SK-N-SH (cell line): ENCODE measurements at regions of chr2 and their contacts with region 1.

Region 1: GRCh38 chr2:68121873-68122679 is 35.6 kb upstream of the PNO1 start:
- DNase-seq: peak; percentile 73
- H3K4me3 ChIP-seq: peak overlapping the region in 1 of 2 experiments; percentile 47; a peak in 1 of 4 replicates
- H3K27ac ChIP-seq: no peak overlapping the region
- H3K4me1 ChIP-seq: peaks cover 0 to 9% of the 10 kb centered on the region in 2 experiments; a peak in 1 of 4 replicates
- H3K27me3 ChIP-seq: no peaks in the 10 kb centered on the region
- CTCF ChIP-seq: peak; percentile 97
- EP300 ChIP-seq: no peak
- RAD21 ChIP-seq: peak; percentile 93

Region 2: GRCh38 chr2:68134554-68134953 is 12.5 kb after region 1 on chr2:
- CTCF ChIA-PET with region 1: interaction called, 39 read pairs
- POLR2A ChIA-PET with region 1: no interaction called
- DNase-seq: no peak
- H3K4me3 ChIP-seq: no peak overlapping the region
- H3K27ac ChIP-seq: no peak overlapping the region
- H3K4me1 ChIP-seq: no peaks in the 10 kb centered on the region
- H3K27me3 ChIP-seq: no peaks in the 10 kb centered on the region
- CTCF ChIP-seq: no peak
- EP300 ChIP-seq: no peak
- RAD21 ChIP-seq: peak; percentile 15; the same call in 1 of the 2 replicates

Region 3: GRCh38 chr2:68169297-68169696 is 47.2 kb after region 1 on chr2:
- CTCF ChIA-PET with region 1: interaction called, 14 read pairs
- POLR2A ChIA-PET with region 1: no interaction called
- DNase-seq: no peak
- H3K4me3 ChIP-seq: no peak overlapping the region
- H3K27ac ChIP-seq: no peak overlapping the region
- H3K4me1 ChIP-seq: no peaks in the 10 kb centered on the region
- H3K27me3 ChIP-seq: no peaks in the 10 kb centered on the region
- CTCF ChIP-seq: peak; percentile 21; the same call in 1 of the 2 replicates
- EP300 ChIP-seq: no peak
- RAD21 ChIP-seq: no peak

Region 4: DNA sequence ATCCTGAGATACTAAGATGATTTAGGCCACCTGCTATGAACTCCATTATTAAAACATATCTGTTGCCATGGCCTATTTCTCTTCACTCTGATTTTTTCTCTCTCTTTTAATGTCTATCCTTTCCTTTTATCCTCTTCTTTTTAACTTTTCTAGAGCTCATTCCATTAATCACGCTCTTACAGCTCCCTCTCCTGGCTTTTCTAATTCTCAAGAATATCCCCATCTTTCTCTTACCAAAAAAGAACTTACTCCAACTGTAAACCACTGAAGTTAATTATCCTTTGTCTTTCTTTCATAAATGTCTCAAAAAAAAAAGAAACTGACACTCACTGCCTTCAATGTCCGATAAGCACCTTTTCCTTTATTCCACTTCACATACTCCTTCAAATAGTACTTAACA is 122.4 kb after region 1 on chr2:
- CTCF ChIA-PET with region 1: interaction called, 17 read pairs
- POLR2A ChIA-PET with region 1: no interaction called
- DNase-seq: no peak
- H3K4me3 ChIP-seq: no peak overlapping the region
- H3K27ac ChIP-seq: peak overlapping the region; percentile 1 to 7; a peak in 2 of 4 replicates
- H3K4me1 ChIP-seq: peaks cover 10 to 43% of the 10 kb centered on the region in 2 experiments
- H3K27me3 ChIP-seq: no peaks in the 10 kb centered on the region
- CTCF ChIP-seq: peak; percentile 44
- EP300 ChIP-seq: no peak
- RAD21 ChIP-seq: peak; percentile 47; the same call in 1 of the 2 replicates

Region 5: DNA sequence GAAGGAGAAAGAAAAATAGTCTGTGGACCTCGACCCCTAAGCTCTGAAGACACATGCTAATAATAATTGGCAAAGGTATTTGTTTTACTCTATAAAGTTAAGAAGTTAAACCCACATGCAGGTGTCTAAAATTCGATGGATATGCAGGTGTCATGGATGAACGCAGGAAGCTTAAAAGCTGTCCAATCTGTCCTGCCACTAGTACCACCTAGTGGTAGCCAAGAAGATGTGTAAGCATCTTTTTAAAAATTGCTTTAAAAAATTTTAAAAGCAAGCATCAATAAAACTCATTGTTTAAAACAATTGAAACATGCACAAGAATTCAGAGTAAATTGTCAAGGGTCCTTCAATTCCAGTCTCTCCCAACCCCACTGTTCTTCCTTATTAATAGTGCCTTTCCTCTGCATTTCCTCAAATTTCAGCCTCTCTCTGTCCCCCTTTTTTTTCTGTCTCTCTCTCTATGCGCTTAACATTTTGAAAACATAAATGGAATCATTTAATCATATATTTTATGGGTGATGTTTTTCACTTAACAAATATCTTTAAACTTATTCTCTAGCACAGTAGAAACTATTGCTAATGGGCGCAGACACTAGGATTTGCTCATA is 160.8 kb after region 1 on chr2:
- CTCF ChIA-PET with region 1: interaction called, 76 read pairs
- POLR2A ChIA-PET with region 1: no interaction called
- DNase-seq: peak; percentile 69
- H3K4me3 ChIP-seq: no peak overlapping the region
- H3K27ac ChIP-seq: no peak overlapping the region
- H3K4me1 ChIP-seq: peaks cover 0 to 4% of the 10 kb centered on the region in 2 experiments; a peak in 2 of 4 replicates
- H3K27me3 ChIP-seq: no peaks in the 10 kb centered on the region
- CTCF ChIP-seq: peak; percentile 89
- EP300 ChIP-seq: no peak
- RAD21 ChIP-seq: peak; percentile 83

Region 6: GRCh38 chr2:68362069-68362468 is 240.0 kb after region 1 on chr2:
- CTCF ChIA-PET with region 1: interaction called, 17 read pairs
- POLR2A ChIA-PET with region 1: no interaction called
- DNase-seq: peak; percentile 68
- H3K4me3 ChIP-seq: no peak overlapping the region
- H3K27ac ChIP-seq: no peak overlapping the region
- H3K4me1 ChIP-seq: no peaks in the 10 kb centered on the region; a peak in 1 of 4 replicates
- H3K27me3 ChIP-seq: no peaks in the 10 kb centered on the region
- CTCF ChIP-seq: peak; percentile 74
- EP300 ChIP-seq: no peak
- RAD21 ChIP-seq: peak; percentile 75